A549 (cell line): ENCODE measurements at regions of chr15 and their contacts with region 1.

Region 1: DNA sequence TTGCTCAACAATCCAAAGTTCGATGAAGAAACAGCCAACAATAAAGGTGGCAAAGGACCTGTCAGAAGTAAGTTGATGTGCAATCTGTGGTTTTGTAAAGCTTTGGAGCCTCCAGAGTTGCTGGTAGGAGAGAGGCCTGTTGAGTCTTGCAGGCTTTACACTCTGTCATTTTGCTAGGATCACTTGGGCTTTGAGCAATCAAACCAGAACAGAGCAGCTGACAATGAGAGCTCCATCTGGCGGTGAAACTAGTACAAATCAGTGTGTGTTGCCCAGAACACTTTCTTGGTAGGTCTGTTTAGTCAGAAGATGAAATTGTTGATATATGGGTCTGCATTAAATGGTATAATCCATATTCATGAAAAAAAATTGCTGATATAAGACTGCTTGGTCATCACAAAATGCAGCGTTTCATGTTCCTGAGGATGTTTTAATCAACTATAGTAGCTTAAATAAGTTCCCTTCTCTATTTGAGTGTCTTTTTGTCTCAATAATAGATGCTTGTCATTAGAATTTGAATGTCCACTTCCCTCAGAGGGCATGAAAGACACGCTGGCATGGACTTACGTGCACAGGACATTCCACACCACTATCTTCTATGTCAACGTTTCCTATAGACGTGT is 25.7 kb downstream of the TMOD2 start:
- DNase-seq: peak; percentile 88
- ATAC-seq: peak; percentile 93 to 97
- H3K4me3 ChIP-seq: no peak overlapping the region
- H3K27ac ChIP-seq: no peak overlapping the region
- H3K4me1 ChIP-seq: peaks cover 13% of the 10 kb centered on the region; the same call in 2 of the 3 replicates
- CTCF ChIP-seq: peak; percentile 92
- EP300 ChIP-seq: no peak
- POLR2A ChIP-seq: no peak
- RAD21 ChIP-seq: peak; percentile 70 to 78

Region 2: DNA sequence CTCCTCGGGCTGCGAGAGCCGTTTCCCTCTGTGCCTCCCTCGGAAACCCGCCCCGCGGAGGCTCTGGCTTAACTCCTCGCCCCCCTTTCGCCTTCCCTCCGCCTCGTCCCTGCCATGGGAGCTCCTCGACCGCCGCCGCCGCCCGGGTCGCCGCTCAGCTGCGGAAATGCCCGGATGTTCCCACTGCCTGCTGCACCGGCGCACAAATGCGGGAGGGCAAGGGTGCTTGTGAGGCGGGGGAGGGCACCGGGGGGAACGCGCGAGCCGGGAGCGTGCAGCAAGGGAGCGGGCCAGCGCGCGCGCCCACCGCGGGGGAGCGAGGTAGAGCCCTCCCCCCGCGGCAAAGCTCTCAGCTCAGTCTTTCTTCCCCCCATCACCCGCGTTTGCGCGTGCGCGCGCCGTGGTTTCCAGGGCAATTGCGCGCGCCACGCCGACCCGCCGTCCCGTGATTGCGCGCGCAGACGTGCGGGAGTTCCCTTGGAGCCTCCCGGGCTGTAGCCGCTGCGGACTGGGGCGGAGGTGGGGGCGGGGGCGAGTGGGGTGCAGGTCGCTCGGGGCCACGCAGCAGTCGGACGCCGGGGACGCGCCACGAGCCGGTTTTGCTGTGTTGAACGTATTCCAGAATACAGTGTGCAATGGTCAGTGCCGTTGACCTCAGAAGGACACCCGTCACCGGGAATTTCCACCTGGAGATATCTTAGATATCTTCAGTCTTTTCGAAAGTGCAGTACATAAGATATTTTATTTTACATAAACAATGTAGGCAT is 154.3 kb before region 1 on chr15 and contains the start of gene DMXL2:
- CTCF ChIA-PET with region 1: interaction called, 31 read pairs
- POLR2A ChIA-PET with region 1: no interaction called
- DNase-seq: peak; percentile 95
- ATAC-seq: peak; percentile 86 to 88
- H3K4me3 ChIP-seq: peak within 1 kb of the TSS; percentile 91
- H3K27ac ChIP-seq: peak within 1 kb of the TSS; percentile 86 to 91
- H3K4me1 ChIP-seq: peaks cover 39% of the 10 kb centered on the region
- CTCF ChIP-seq: no peak
- EP300 ChIP-seq: no peak
- POLR2A ChIP-seq: peak; percentile 69
- RAD21 ChIP-seq: no peak
- polyA plus RNA-seq, gene DMXL2: 50.9 and 58.7 TPM in 2 replicates

Region 3: GRCh38 chr15:51672155-51672687 is 104.8 kb before region 1 on chr15:
- CTCF ChIA-PET with region 1: interaction called, 25 read pairs
- POLR2A ChIA-PET with region 1: no interaction called
- DNase-seq: no peak
- ATAC-seq: no peak
- H3K4me3 ChIP-seq: no peak overlapping the region
- H3K27ac ChIP-seq: no peak overlapping the region
- H3K4me1 ChIP-seq: no peaks in the 10 kb centered on the region
- CTCF ChIP-seq: no peak
- EP300 ChIP-seq: no peak
- POLR2A ChIP-seq: no peak
- RAD21 ChIP-seq: no peak

Region 4: GRCh38 chr15:51726351-51727073 is 50.6 kb before region 1 on chr15:
- CTCF ChIA-PET with region 1: interaction called, 73 read pairs
- POLR2A ChIA-PET with region 1: no interaction called
- DNase-seq: peak; percentile 74 to 88
- ATAC-seq: peak; percentile 97 to 98
- H3K4me3 ChIP-seq: no peak overlapping the region
- H3K27ac ChIP-seq: 0 out of 6 replicates have a peak overlapping the region, but pooled peaks of 1 of the 2 experiments have one; percentile 10
- H3K4me1 ChIP-seq: peaks cover 21% of the 10 kb centered on the region
- CTCF ChIP-seq: no peak
- EP300 ChIP-seq: no peak
- POLR2A ChIP-seq: no peak
- RAD21 ChIP-seq: peak in 1 of 2 experiments; percentile 10; a peak in 1 of 5 replicates

Region 5: DNA sequence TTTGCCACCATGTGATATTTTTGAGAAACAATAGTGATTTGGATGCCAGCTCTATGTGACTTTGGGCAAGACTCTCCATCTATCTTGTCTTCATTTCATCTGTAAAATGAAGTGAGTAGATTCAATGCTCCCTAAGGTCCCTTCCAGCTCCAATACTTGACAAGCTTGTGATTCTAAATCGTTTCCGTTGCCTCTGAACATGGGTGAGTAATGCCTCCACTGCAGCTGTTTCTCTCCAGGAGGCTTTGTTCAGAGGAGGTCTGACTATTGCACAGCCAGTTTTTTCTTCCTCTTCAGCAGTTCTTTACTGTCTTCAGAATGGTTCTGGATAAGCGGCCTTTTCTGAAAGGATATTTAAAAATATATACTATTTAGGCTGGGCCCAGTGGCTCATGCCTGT is 37.5 kb after region 1 on chr15:
- CTCF ChIA-PET with region 1: interaction called, 12 read pairs
- POLR2A ChIA-PET with region 1: no interaction called
- DNase-seq: no peak
- ATAC-seq: no peak
- H3K4me3 ChIP-seq: no peak overlapping the region
- H3K27ac ChIP-seq: no peak overlapping the region
- H3K4me1 ChIP-seq: no peaks in the 10 kb centered on the region
- CTCF ChIP-seq: no peak
- EP300 ChIP-seq: no peak
- POLR2A ChIP-seq: no peak
- RAD21 ChIP-seq: no peak

Region 6: DNA sequence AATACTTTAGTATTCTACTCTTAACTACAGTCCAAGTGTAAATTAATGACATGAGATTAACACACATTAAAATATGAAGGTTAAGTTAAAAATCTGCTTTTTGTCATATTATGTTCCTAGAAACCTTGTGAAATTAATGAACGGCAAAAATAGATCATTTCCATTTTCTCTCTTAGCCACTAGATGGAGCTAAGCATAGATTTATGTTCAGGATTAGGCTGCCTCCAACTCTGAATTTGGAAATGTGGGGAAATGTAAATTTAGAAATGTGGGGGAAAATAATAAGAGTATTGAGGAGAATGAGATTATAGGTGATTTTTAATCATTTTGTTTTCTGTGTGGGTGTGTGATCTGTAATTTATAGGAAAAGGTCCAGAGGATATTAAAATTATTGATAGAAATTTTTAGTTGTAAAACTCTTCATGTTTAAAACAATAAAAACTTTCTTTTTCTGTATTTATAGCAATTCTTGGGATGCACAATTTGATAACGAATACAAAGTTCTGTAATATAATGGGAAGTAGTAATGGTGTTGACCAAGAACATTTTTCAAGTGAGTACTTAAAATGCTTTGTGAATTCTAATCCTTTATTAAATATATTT is 111.6 kb after region 1 on chr15:
- CTCF ChIA-PET with region 1: interaction called, 22 read pairs
- POLR2A ChIA-PET with region 1: no interaction called
- DNase-seq: peak; percentile 46 to 51
- ATAC-seq: peak; percentile 60 to 69; a peak in 4 of 6 replicates
- H3K4me3 ChIP-seq: 0 out of 3 replicates have a peak overlapping the region, but pooled peaks have one; percentile 20
- H3K27ac ChIP-seq: peak overlapping the region; percentile 72 to 80
- H3K4me1 ChIP-seq: peaks cover 48% of the 10 kb centered on the region
- CTCF ChIP-seq: peak; percentile 85
- EP300 ChIP-seq: no peak
- POLR2A ChIP-seq: no peak
- RAD21 ChIP-seq: peak; percentile 61 to 68

Region 7: GRCh38 chr15:51982013-51982769 is 205.1 kb after region 1 on chr15:
- CTCF ChIA-PET with region 1: no interaction called
- POLR2A ChIA-PET with region 1: no interaction called
- DNase-seq: peak; percentile 83 to 89
- ATAC-seq: peak; percentile 94 to 96
- H3K4me3 ChIP-seq: peak overlapping the region; percentile 25; the same call in 2 of the 3 replicates
- H3K27ac ChIP-seq: peak overlapping the region; percentile 81 to 87
- H3K4me1 ChIP-seq: peaks cover 22% of the 10 kb centered on the region
- CTCF ChIP-seq: peak; percentile 97
- EP300 ChIP-seq: no peak
- POLR2A ChIP-seq: no peak
- RAD21 ChIP-seq: peak; percentile 96 to 98